ENCODE measurements at regions of chr13 and their contacts with region 1.

Region 1: DNA sequence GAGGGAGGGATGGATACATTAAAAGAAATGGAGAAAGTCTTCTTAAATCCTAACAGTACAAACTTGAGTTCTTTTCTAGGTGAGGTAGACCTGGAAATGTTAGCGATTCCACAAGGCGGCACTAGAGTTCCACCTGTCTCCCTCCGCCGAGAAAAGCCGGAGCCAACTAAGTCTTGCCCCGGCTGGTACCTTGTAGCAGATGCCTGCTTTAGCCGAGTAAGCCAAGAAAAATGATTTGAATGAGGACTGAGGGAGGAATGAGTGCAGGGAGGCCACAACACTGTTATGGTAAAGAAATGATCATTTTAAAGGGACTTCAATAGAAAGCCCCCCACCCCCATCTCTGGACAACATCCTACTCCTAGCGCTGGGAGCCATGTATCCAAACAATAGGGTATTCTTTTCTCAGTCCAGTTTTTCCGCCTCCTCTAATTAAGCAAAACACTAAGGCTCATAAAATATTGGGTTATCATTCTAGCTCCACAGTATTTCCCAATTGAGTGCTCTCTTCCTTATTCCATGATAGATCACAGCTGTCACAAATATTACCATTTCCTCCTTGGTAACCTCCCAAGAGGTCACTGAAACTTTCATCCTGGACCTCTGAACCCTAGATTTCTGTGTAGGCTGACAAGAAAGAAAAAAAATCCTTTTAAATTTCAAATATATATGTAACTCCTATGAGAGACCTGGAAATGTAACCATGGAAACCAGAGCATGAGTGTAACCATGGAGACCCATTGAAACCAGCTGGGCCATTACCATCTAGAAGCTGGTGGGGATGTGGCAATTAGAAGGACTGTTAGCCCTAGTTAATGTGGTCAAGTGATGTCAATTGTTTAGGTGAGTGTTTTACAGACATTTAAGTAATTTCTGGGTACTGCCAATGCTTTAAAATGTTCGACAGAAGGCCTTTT is 58.3 kb downstream of the GPALPP1 start:
- DNase-seq: peak; percentile 82
- H3K4me3 Mint-ChIP-seq: peak overlapping the region; percentile 63
- H3K27ac Mint-ChIP-seq: no peak overlapping the region
- H3K4me1 Mint-ChIP-seq: peaks cover 21% of the 10 kb centered on the region
- H3K27me3 Mint-ChIP-seq: peaks cover 52% of the 10 kb centered on the region

Region 2: DNA sequence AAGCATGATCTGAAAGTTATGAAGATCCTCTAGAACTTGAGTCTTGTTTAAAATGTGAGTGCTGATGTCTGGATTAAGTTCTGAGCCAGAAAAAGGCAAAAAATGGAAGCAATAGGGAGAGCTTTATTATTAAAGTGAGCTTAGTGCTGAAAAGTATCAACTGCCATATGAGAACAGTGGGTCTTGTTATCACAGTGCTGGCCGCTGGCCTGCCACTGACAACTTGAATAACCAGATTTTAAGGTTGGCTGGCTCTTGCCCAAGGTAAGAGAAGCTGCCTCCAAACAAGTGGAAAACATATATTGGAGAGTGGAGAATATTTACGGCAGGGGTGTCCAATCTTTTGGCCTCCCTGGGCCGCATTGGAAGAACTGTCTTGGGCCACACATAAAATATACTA is 92.2 kb before region 1 on chr13:
- CTCF ChIA-PET with region 1: no interaction called
- POLR2A ChIA-PET with region 1: no interaction called
- DNase-seq: no peak
- H3K4me3 Mint-ChIP-seq: no peak overlapping the region
- H3K27ac Mint-ChIP-seq: no peak overlapping the region
- H3K4me1 Mint-ChIP-seq: no peaks in the 10 kb centered on the region
- H3K27me3 Mint-ChIP-seq: no peaks in the 10 kb centered on the region

Region 3: GRCh38 chr13:45109102-45109720 is 61.6 kb after region 1 on chr13:
- CTCF ChIA-PET with region 1: no interaction called
- POLR2A ChIA-PET with region 1: no interaction called
- DNase-seq: no peak
- H3K4me3 Mint-ChIP-seq: no peak overlapping the region
- H3K27ac Mint-ChIP-seq: no peak overlapping the region
- H3K4me1 Mint-ChIP-seq: peaks cover 10% of the 10 kb centered on the region
- H3K27me3 Mint-ChIP-seq: peaks cover 16% of the 10 kb centered on the region

Region 4: GRCh38 chr13:45280751-45281634 is 233.3 kb after region 1 on chr13:
- CTCF ChIA-PET with region 1: interaction called, 32 read pairs
- POLR2A ChIA-PET with region 1: interaction called, 3 read pairs
- DNase-seq: peak; percentile 51
- H3K4me3 Mint-ChIP-seq: no peak overlapping the region
- H3K27ac Mint-ChIP-seq: no peak overlapping the region
- H3K4me1 Mint-ChIP-seq: no peaks in the 10 kb centered on the region
- H3K27me3 Mint-ChIP-seq: no peaks in the 10 kb centered on the region

Region 5: GRCh38 chr13:45310341-45311125 is 262.9 kb after region 1 on chr13:
- CTCF ChIA-PET with region 1: interaction called, 102 read pairs
- POLR2A ChIA-PET with region 1: interaction called, 3 read pairs
- DNase-seq: no peak
- H3K4me3 Mint-ChIP-seq: peak overlapping the region; percentile 69
- H3K27ac Mint-ChIP-seq: peak overlapping the region; percentile 3
- H3K4me1 Mint-ChIP-seq: peaks cover 18% of the 10 kb centered on the region
- H3K27me3 Mint-ChIP-seq: peaks cover 23% of the 10 kb centered on the region

Region 6: DNA sequence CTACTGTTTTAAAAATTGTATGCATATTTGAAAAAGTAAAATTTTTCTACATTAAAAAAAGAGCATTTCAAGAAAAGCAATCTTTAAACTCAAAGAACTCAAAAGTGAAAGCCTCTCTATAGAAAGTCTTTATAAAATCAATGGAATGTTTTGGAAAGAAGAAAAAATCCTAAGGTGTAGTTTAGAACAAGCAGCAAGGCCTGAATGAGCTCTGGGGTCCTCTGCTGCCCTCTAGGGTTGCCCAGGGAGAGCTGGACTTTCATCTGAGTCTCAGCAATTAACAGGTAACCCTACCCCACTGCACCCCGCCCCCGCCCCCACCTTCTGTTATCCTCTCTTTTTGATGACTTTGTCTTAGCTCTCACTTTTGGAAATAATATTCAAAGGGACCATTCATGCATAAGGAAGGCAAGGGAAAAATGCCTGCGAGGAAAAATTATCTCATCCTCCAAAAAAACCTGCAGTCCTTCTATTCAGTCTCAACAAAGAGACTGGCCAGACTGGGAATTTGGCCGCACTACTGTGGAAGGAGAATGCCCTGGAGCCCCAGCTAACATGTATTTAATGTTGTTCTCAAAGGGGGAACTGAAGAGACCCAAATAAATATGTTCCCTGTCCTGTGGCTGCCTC is 346.4 kb after region 1 on chr13:
- CTCF ChIA-PET with region 1: interaction called, 12 read pairs
- POLR2A ChIA-PET with region 1: no interaction called
- DNase-seq: peak; percentile 26
- H3K4me3 Mint-ChIP-seq: no peak overlapping the region
- H3K27ac Mint-ChIP-seq: no peak overlapping the region
- H3K4me1 Mint-ChIP-seq: peaks cover 48% of the 10 kb centered on the region
- H3K27me3 Mint-ChIP-seq: no peaks in the 10 kb centered on the region